Endothelial cell of umbilical vein (primary cell): ENCODE measurements at regions of chr5 and their contacts with region 1.

Region 1: GRCh38 chr5:137778772-137779564 is 24.8 kb upstream of the HNRNPA0 start:
- DNase-seq: peak; percentile 59
- H3K4me3 ChIP-seq: no peak overlapping the region
- H3K27ac ChIP-seq: no peak overlapping the region
- H3K4me1 ChIP-seq: no peaks in the 10 kb centered on the region
- H3K27me3 ChIP-seq: peaks cover 7 to 13% of the 10 kb centered on the region in 2 experiments
- CTCF ChIP-seq: peak; percentile 50 to 51
- POLR2A ChIP-seq: no peak

Region 2: DNA sequence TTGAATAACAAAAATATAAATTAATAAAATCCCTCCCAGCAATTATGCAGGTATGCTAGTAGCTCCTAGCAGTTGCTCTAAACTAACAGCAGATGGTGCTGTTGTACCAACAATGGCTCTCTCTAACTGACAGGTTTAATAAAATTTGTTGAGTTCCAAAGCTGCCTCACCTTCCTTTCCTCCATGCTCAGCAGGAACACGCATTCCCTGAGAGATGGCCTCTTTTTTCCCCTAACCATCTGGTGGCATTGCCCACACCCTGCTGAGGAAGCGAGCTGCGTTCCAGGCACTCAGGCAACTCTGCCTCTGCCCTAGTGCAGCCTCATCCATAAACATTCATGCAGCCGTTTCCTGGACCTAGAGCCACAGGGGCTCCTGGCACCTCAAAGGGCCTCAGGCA is 149.3 kb before region 1 on chr5:
- CTCF ChIA-PET with region 1: interaction called, 103 read pairs
- POLR2A ChIA-PET with region 1: no interaction called
- dilution Hi-C with region 1: no loop called
- intact Hi-C with region 1: no loop called
- DNase-seq: peak; percentile 60
- H3K4me3 ChIP-seq: no peak overlapping the region
- H3K27ac ChIP-seq: no peak overlapping the region
- H3K4me1 ChIP-seq: peaks cover 3% of the 10 kb centered on the region
- H3K27me3 ChIP-seq: no peaks in the 10 kb centered on the region
- CTCF ChIP-seq: peak; percentile 62 to 76
- POLR2A ChIP-seq: no peak

Region 3: DNA sequence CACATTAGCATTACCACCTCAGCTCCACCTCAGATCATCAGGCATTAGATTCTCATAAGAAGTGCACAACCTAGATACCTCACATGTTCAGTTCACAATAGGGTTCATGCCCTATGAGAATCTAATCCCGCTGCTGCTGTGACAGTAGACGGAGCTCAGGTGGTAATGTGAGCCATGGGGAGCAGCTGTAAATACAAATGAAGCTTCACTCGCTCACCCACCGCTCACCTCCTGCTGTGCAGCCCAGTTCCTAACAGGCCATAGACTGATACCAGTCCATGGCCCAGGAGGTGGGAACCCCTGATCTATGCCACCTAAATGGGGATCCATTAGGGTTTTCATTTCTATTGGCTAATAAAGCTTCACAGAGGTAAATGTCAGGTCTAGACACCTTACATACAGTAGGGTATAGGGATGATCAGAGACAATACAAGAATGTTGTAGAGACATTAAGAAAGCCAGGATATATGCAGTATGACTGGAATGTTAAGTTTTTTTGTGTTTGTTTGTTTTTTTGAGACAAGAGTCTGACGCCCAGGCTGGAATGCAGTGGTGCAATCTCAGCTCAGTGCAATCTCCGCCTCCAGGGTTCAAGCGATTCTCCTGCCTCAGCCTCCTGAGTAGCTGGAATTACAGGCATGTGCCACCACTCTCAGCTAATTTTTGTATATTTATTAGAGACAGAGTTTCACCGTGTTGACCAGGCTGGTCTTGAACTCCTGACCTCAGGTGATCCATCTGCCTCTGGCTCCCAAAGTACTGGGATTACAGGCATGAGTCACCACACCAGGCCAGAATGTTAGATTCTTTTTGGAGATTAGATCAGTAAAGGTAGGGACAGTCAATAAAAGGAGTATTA is 18.4 kb before region 1 on chr5:
- CTCF ChIA-PET with region 1: interaction called, 50 read pairs
- POLR2A ChIA-PET with region 1: no interaction called
- dilution Hi-C with region 1: no loop called
- intact Hi-C with region 1: no loop called
- DNase-seq: no peak
- H3K4me3 ChIP-seq: no peak overlapping the region
- H3K27ac ChIP-seq: no peak overlapping the region
- H3K4me1 ChIP-seq: no peaks in the 10 kb centered on the region
- H3K27me3 ChIP-seq: peaks cover 2% of the 10 kb centered on the region in 2 experiments
- CTCF ChIP-seq: no peak
- POLR2A ChIP-seq: no peak

Region 4: GRCh38 chr5:137822158-137822764 is 43.3 kb after region 1 on chr5:
- CTCF ChIA-PET with region 1: interaction called, 28 read pairs
- POLR2A ChIA-PET with region 1: no interaction called
- dilution Hi-C with region 1: no loop called
- intact Hi-C with region 1: loop called (anchors 1 kb)
- DNase-seq: peak; percentile 31
- H3K4me3 ChIP-seq: no peak overlapping the region
- H3K27ac ChIP-seq: no peak overlapping the region
- H3K4me1 ChIP-seq: no peaks in the 10 kb centered on the region
- H3K27me3 ChIP-seq: peaks cover 10 to 19% of the 10 kb centered on the region in 2 experiments
- CTCF ChIP-seq: peak; percentile 17 to 51
- POLR2A ChIP-seq: no peak

Region 5: DNA sequence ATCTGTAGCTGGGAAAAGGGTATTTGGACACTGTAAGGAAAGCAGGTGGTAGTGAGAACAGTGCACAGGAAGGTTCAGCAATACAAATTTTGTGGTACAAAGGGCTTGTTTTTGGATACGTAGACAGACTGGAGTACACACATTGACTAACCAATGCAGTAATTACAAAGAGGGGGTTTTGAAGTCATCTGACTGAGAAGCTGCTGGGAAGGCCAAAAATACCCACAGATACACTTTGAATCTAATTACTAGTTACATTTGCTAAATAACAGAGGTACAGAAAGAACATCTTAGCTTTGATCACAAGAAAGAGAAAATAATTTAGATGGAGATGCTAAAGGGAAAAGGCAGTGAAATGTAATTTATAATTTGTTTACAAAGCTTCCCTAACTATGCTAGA is 156.2 kb after region 1 on chr5:
- CTCF ChIA-PET with region 1: interaction called, 18 read pairs
- POLR2A ChIA-PET with region 1: no interaction called
- dilution Hi-C with region 1: no loop called
- intact Hi-C with region 1: no loop called
- DNase-seq: no peak
- H3K4me3 ChIP-seq: no peak overlapping the region
- H3K27ac ChIP-seq: no peak overlapping the region
- H3K4me1 ChIP-seq: no peaks in the 10 kb centered on the region
- H3K27me3 ChIP-seq: no peaks in the 10 kb centered on the region
- CTCF ChIP-seq: no peak
- POLR2A ChIP-seq: no peak

Region 6: DNA sequence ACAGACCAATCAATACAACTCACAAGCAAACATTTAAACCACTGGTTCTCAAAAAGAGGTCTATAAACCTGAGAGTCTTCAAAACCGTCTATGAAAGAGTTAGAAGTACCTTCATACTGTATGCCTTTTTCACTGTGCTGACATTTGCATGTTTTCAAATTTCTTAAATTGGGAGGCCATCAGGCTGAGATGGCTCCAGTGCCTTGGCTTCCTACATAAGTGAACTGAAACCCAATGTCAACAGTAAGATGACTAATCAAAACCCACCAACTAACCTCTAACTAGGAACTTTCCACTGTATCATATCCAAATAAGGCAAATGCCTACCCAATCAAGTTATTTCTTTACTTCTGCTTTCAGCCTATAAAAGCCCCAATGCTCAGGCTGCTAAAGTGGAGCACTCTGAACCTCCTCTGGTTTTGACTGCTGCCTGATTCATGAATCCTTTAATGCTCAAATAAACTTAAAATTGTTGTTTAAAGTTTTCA is 218.8 kb after region 1 on chr5:
- CTCF ChIA-PET with region 1: interaction called, 13 read pairs
- POLR2A ChIA-PET with region 1: no interaction called
- dilution Hi-C with region 1: no loop called
- intact Hi-C with region 1: no loop called
- DNase-seq: peak; percentile 6
- H3K4me3 ChIP-seq: no peak overlapping the region
- H3K27ac ChIP-seq: no peak overlapping the region
- H3K4me1 ChIP-seq: peaks cover 16% of the 10 kb centered on the region
- H3K27me3 ChIP-seq: no peaks in the 10 kb centered on the region
- CTCF ChIP-seq: no peak
- POLR2A ChIP-seq: no peak

Region 7: GRCh38 chr5:138095100-138095907 is 316.3 kb after region 1 on chr5:
- CTCF ChIA-PET with region 1: interaction called, 12 read pairs
- POLR2A ChIA-PET with region 1: no interaction called
- dilution Hi-C with region 1: no loop called
- intact Hi-C with region 1: no loop called
- DNase-seq: no peak
- H3K4me3 ChIP-seq: no peak overlapping the region
- H3K27ac ChIP-seq: no peak overlapping the region
- H3K4me1 ChIP-seq: no peaks in the 10 kb centered on the region
- H3K27me3 ChIP-seq: peaks cover 18 to 40% of the 10 kb centered on the region in 2 experiments
- CTCF ChIP-seq: no peak
- POLR2A ChIP-seq: no peak